ENCODE measurements at regions of chr9 and their contacts with region 1.

Region 1: GRCh38 chr9:113807173-113808061 is 68.7 kb upstream of the ZNF618 start:
- DNase-seq: peak; percentile 55
- ATAC-seq: no peak
- H3K4me3 Mint-ChIP-seq: no peak overlapping the region
- H3K27ac Mint-ChIP-seq: no peak overlapping the region
- H3K4me1 Mint-ChIP-seq: peaks cover 4% of the 10 kb centered on the region
- H3K27me3 Mint-ChIP-seq: peaks cover 6% of the 10 kb centered on the region
- CTCF ChIP-seq: peak; percentile 91

Region 2: GRCh38 chr9:113463418-113464285 is 343.8 kb before region 1 on chr9 and contains the start of gene RGS3:
- CTCF ChIA-PET with region 1: no interaction called
- POLR2A ChIA-PET with region 1: no interaction called
- intact Hi-C with region 1: no loop called
- DNase-seq: no peak
- ATAC-seq: no peak
- H3K4me3 Mint-ChIP-seq: no peak within 1 kb of the TSS
- H3K27ac Mint-ChIP-seq: no peak within 1 kb of the TSS
- H3K4me1 Mint-ChIP-seq: peaks cover 3% of the 10 kb centered on the region
- H3K27me3 Mint-ChIP-seq: no peaks in the 10 kb centered on the region
- CTCF ChIP-seq: no peak
- total RNA-seq, gene RGS3: 51.0 to 51.5 TPM

Region 3: DNA sequence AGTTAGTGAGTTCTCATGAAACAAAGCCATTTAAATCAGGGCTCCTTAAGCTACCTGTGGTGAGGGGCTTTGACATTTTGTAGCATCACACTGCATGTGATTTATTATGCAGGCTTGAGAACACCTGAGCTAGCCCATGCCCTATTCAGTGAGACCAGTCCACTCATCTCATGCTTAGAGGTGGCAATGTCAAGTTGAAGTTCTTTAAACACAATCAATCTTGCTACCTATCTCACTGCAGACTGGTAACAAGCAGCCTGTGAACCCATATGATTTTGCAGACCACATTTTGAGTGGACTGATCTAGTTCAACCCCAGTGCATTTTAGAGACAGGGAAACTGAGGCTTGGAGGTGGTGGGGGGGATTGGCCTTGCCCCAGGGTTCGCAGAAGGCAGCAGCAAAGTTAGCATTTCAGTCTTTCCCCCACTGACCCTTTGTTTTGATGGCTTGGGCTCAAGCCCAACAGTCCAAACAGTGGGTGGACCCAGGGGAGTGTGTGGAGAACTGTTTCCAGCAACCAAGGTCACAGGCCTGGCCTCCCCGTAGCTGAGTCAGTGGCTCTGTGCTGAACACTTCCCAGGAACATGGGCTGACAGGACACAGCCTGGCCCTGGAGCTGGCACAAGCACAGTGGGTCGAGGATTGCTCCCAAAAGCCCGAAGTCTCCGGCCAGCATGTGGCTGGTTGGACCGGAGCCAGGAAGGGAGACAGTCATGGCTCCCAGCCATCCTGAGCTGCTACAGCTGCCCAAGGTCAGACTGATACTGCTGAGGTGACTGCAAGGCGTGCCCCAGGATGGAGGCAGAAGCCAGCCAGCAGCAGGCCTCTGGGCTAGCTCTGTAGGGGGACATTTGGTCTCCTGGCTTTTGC is 248.6 kb before region 1 on chr9:
- CTCF ChIA-PET with region 1: no interaction called
- POLR2A ChIA-PET with region 1: no interaction called
- intact Hi-C with region 1: no loop called
- DNase-seq: no peak
- ATAC-seq: no peak
- H3K4me3 Mint-ChIP-seq: no peak overlapping the region
- H3K27ac Mint-ChIP-seq: peak overlapping the region; percentile 11
- H3K4me1 Mint-ChIP-seq: peaks cover 53% of the 10 kb centered on the region
- H3K27me3 Mint-ChIP-seq: no peaks in the 10 kb centered on the region
- CTCF ChIP-seq: no peak

Region 4: DNA sequence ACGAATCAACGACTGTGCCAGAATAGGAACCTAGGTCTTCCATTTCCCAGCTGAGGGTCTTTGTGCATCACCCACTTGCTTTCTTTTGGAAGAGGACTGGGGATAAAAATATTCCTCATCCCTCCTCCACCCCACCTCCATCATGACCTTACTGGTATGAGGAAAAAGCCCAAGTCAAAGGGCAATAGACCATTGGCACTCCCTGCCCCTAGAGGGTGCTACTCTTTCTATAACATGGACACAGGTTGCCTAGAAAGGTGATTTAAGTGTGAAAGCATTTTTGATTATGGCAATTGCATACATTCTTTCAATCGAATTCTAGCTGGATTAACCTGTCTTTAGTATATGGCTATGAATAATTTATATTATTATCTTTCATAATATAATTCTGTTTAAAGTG is 45.9 kb after region 1 on chr9:
- CTCF ChIA-PET with region 1: no interaction called
- POLR2A ChIA-PET with region 1: no interaction called
- intact Hi-C with region 1: no loop called
- DNase-seq: peak; percentile 24
- ATAC-seq: no peak
- H3K4me3 Mint-ChIP-seq: no peak overlapping the region
- H3K27ac Mint-ChIP-seq: no peak overlapping the region
- H3K4me1 Mint-ChIP-seq: peaks cover 9% of the 10 kb centered on the region
- H3K27me3 Mint-ChIP-seq: peaks cover 7% of the 10 kb centered on the region
- CTCF ChIP-seq: peak; percentile 29

Region 5: DNA sequence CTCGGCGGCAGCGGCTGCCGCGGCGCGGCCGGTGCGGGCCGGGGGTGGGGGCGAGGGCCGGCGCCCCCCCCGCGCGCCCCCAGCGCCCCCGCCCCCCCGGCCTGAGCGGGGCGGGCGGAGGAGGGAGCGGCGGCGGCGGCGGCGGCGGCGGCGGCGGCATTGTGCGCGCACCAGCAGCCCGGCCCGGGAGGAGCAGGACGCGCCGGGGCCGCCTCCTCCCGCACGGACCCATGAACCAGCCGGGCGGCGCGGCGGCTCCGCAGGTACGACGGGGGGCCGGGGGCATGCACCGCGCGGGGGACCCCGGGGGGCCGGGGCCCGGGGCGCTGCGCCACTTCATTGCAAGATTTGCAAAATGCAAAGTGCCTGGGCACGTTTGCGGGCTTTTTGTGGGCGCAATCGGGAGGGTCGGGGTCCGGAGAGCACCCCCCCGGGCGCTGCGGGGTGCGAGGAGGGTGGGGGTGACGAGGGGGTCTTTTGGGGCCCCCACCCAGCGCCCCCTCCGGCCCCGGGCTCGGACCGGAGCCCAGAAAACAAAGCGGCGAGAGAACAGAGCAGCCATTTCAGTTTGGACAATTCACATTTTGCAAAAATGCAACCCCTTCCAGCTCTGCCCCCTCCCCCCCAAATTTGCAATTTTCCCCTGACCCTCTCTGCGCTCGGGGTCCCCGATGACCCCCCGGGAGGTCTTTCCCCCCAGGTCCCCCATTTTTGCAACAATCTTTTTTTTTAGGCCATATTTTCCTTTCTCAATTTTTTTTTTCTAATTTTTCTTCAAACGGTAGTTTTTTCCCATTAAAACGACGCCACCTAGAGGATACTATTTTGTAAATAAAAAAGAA is 69.0 kb after region 1 on chr9 and contains the start of gene ZNF618:
- CTCF ChIA-PET with region 1: interaction called, 15 read pairs
- POLR2A ChIA-PET with region 1: no interaction called
- intact Hi-C with region 1: loop called (anchors 5 kb)
- DNase-seq: peak; percentile 29
- ATAC-seq: peak; percentile 66
- H3K4me3 Mint-ChIP-seq: peak within 1 kb of the TSS; percentile 83
- H3K27ac Mint-ChIP-seq: no peak within 1 kb of the TSS
- H3K4me1 Mint-ChIP-seq: peaks cover 4% of the 10 kb centered on the region
- H3K27me3 Mint-ChIP-seq: peaks cover 11% of the 10 kb centered on the region
- CTCF ChIP-seq: peak; percentile 57
- total RNA-seq, gene ZNF618: 0.22 to 0.27 TPM

Region 6: GRCh38 chr9:113963017-113963620 is 155.7 kb after region 1 on chr9:
- CTCF ChIA-PET with region 1: interaction called, 5 read pairs
- POLR2A ChIA-PET with region 1: no interaction called
- intact Hi-C with region 1: loop called (anchors 5 kb)
- DNase-seq: peak; percentile 62
- ATAC-seq: peak; percentile 55
- H3K4me3 Mint-ChIP-seq: no peak overlapping the region
- H3K27ac Mint-ChIP-seq: no peak overlapping the region
- H3K4me1 Mint-ChIP-seq: no peaks in the 10 kb centered on the region
- H3K27me3 Mint-ChIP-seq: no peaks in the 10 kb centered on the region
- CTCF ChIP-seq: peak; percentile 81

Region 7: GRCh38 chr9:114033397-114034103 is 226.1 kb after region 1 on chr9:
- CTCF ChIA-PET with region 1: no interaction called
- POLR2A ChIA-PET with region 1: no interaction called
- intact Hi-C with region 1: loop called (anchors 2 kb)
- DNase-seq: peak; percentile 30
- ATAC-seq: peak; percentile 24
- H3K4me3 Mint-ChIP-seq: no peak overlapping the region
- H3K27ac Mint-ChIP-seq: no peak overlapping the region
- H3K4me1 Mint-ChIP-seq: no peaks in the 10 kb centered on the region
- H3K27me3 Mint-ChIP-seq: no peaks in the 10 kb centered on the region
- CTCF ChIP-seq: peak; percentile 25